ENCODE measurements at regions of chr6 and their contacts with region 1.

Region 1: GRCh38 chr6:126923807-126924206 is 194.7 kb upstream of the RSPO3 start:
- DNase-seq: no peak
- H3K4me3 ChIP-seq: no peak overlapping the region
- H3K27ac ChIP-seq: no peak overlapping the region
- H3K4me1 ChIP-seq: no peaks in the 10 kb centered on the region
- H3K27me3 ChIP-seq: no peaks in the 10 kb centered on the region
- CTCF ChIP-seq: no peak
- EP300 ChIP-seq: no peak
- POLR2A ChIP-seq: no peak

Region 2: GRCh38 chr6:126581316-126581715 is 342.5 kb before region 1 on chr6:
- in situ Hi-C with region 1: no loop called
- intact Hi-C with region 1: no loop called
- DNase-seq: no peak
- H3K4me3 ChIP-seq: no peak overlapping the region
- H3K27ac ChIP-seq: no peak overlapping the region
- H3K4me1 ChIP-seq: no peaks in the 10 kb centered on the region
- H3K27me3 ChIP-seq: no peaks in the 10 kb centered on the region
- CTCF ChIP-seq: no peak
- EP300 ChIP-seq: no peak
- POLR2A ChIP-seq: no peak

Region 3: GRCh38 chr6:126939784-126940183 is 16.0 kb after region 1 on chr6:
- in situ Hi-C with region 1: no loop called
- intact Hi-C with region 1: loop called (anchors 1 kb)
- DNase-seq: no peak
- H3K4me3 ChIP-seq: no peak overlapping the region
- H3K27ac ChIP-seq: no peak overlapping the region
- H3K4me1 ChIP-seq: no peaks in the 10 kb centered on the region
- H3K27me3 ChIP-seq: no peaks in the 10 kb centered on the region
- CTCF ChIP-seq: no peak
- EP300 ChIP-seq: no peak
- POLR2A ChIP-seq: no peak

Measured in transverse colon (tissue), 4 donors.